ENCODE measurements at regions of chr5 and their contacts with region 1.

Region 1: GRCh38 chr5:173293817-173294672 is 34.2 kb downstream of the STC2 start:
- DNase-seq: peak; percentile 49 to 88 (median 78)
- ATAC-seq: peak; percentile 78 to 90 (median 79)
- H3K4me3 ChIP-seq: no peak overlapping the region
- H3K27ac ChIP-seq: no peak overlapping the region
- H3K4me1 ChIP-seq: peaks cover 0 to 8% (median 0%) of the 10 kb centered on the region in 3 donors
- H3K27me3 ChIP-seq: no peaks in the 10 kb centered on the region
- CTCF ChIP-seq: peak; percentile 72 to 78 (median 75)

Region 2: DNA sequence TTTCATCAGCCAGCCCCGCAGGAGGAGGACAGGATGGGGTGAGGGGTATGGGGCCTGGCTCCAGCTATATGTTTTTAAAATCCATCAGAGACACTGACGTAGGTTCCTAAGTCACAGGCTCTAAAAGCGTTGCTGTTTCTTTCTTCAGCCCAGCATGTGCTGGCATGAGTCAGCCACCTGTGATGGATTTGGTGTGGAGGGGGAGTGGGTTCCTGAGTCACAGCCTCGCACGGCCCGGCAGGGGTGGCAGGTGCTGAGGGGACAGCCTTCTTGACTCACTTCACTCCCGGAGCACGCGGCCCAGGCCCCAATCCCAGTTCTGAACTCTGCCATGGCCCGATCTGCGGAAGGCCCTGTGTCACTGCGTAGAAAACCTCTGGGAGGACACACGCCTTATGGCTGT is 373.6 kb before region 1 on chr5:
- intact Hi-C with region 1: no loop called
- DNase-seq: peak in 1 of 6 donors; percentile 63
- ATAC-seq: peak in 1 of 4 donors; percentile 30
- H3K4me3 ChIP-seq: no peak overlapping the region
- H3K27ac ChIP-seq: no peak overlapping the region
- H3K4me1 ChIP-seq: no peaks in the 10 kb centered on the region
- H3K27me3 ChIP-seq: no peaks in the 10 kb centered on the region
- CTCF ChIP-seq: no peak

Region 3: GRCh38 chr5:173331956-173332479 is 38.0 kb after region 1 on chr5:
- intact Hi-C with region 1: loop called in 2 of 3 experiments (anchors 5 kb)
- DNase-seq: peak; percentile 82 to 95 (median 92)
- ATAC-seq: peak; percentile 58 to 77 (median 72)
- H3K4me3 ChIP-seq: no peak overlapping the region
- H3K27ac ChIP-seq: no peak overlapping the region
- H3K4me1 ChIP-seq: peaks cover 3 to 7% (median 5%) of the 10 kb centered on the region in 3 donors
- H3K27me3 ChIP-seq: no peaks in the 10 kb centered on the region
- CTCF ChIP-seq: peak; percentile 79 to 87 (median 84)

Region 4: GRCh38 chr5:173352366-173353349 is 58.6 kb after region 1 on chr5:
- intact Hi-C with region 1: no loop called
- DNase-seq: no peak
- ATAC-seq: no peak
- H3K4me3 ChIP-seq: no peak overlapping the region
- H3K27ac ChIP-seq: no peak overlapping the region
- H3K4me1 ChIP-seq: no peaks in the 10 kb centered on the region
- H3K27me3 ChIP-seq: no peaks in the 10 kb centered on the region
- CTCF ChIP-seq: no peak

Region 5: GRCh38 chr5:173573126-173573960 is 279.3 kb after region 1 on chr5:
- intact Hi-C with region 1: loop called in 2 of 3 experiments (anchors 5 to 10 kb)
- DNase-seq: peak; percentile 53 to 95 (median 84)
- ATAC-seq: peak; percentile 97 to 100 (median 98)
- H3K4me3 ChIP-seq: peak overlapping the region in 2 of 4 donors; percentile 13 to 15
- H3K27ac ChIP-seq: no peak overlapping the region
- H3K4me1 ChIP-seq: peaks cover 0 to 7% (median 0%) of the 10 kb centered on the region in 3 donors
- H3K27me3 ChIP-seq: no peaks in the 10 kb centered on the region
- CTCF ChIP-seq: peak; percentile 96 to 99 (median 97)

Measured in pancreas (tissue), 10 donors.